KBM-7 (cell line): ENCODE measurements at regions of chr7 and their contacts with region 1.

Region 1: GRCh38 chr7:125061776-125062397 is 132.3 kb upstream of the POT1 start:
- DNase-seq: peak; percentile 63

Region 2: DNA sequence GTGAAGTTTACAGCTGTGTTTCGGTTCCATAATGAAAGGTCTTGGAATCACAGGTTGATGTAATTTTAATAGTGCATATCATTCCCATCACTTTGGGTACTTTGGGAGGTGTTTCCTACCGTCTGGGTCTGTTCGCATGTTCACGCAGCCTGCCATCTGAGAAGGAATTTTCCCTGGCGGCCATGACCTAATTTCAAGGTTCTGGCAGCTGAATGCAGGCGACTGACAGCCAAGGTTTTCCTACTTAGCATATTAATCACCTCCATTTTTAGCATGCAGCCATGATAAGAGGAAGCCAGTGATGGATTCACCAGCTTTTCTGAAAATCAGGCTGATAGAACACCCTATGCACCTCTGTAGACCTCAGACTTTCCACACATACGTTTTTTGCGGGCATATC is 709.9 kb before region 1 on chr7:
- in situ Hi-C with region 1: no loop called
- DNase-seq: no peak

Region 3: GRCh38 chr7:125173571-125173970 is 111.7 kb after region 1 on chr7:
- in situ Hi-C with region 1: no loop called
- DNase-seq: no peak

Region 4: GRCh38 chr7:125316466-125316865 is 254.6 kb after region 1 on chr7:
- in situ Hi-C with region 1: loop called (anchors 25 kb)
- DNase-seq: peak; percentile 70

Region 5: DNA sequence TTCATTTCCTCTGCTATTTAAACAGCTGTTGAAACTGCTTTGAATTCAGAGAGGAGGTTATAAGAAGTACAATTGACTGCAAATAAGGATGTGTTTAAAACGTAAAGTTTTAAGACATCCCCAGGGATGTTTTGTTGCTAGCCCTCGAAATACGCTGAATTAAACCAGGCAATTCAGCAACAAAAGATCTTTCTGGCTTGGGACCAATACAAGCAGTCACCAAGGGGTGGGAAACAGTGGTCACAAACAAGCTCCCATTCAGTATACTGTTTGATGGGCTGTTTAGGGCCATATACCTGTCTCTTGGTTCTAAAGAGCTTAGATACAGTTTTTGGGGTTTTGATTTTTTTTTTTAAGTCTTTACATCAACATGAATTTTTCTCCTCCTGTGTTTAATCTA is 314.1 kb after region 1 on chr7:
- in situ Hi-C with region 1: no loop called
- DNase-seq: no peak

Region 6: DNA sequence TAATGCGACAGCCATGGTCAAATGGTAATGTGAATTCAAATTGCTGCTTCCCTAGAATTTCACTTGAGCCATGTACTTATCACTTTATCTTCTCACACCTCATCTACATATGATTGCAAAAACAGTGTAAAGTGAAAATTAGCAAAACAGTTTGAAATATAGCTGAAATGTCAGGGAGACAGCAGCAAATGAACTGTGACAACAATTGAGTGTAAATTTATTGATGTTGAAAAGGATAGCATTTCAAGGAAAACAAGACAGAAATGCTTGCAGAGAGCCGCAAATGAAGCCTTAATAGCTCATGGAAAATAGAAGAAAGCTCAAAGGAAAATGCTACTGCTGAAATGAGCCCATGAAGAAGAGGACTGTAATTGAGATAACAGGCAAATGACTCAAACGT is 383.9 kb after region 1 on chr7:
- in situ Hi-C with region 1: no loop called
- DNase-seq: no peak

Region 7: DNA sequence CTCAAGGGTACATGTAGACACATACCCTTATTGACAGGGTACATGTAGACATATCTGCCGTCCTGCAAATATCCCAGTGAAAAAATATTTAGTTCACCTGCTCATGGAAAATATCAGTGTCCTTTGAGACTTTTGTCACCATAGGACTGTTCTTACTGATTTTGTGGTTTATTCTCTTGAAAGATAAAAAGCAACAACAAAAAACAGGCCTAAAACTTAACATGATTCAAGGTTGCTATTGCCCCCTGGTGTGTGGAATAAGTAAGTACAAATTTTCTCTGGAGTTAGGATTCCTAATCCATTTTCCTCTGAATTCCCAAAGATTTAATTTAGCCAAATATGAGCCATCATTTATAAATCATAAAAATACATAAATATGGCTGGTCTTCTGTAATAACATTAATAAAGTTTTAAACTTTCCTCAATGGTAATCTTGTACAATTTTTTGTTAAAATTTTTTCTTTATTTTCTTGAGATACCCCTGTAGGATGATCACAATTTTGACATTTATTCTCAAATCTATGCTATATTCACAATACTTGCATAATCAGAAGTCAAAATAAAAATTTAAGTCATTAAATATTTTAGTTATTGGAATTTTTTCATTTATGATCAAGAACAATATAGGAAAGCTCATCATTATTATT is 609.2 kb after region 1 on chr7:
- in situ Hi-C with region 1: loop called (anchors 25 kb)
- DNase-seq: peak; percentile 61